ENCODE measurements at regions of chr6 and their contacts with region 1.

Region 1: DNA sequence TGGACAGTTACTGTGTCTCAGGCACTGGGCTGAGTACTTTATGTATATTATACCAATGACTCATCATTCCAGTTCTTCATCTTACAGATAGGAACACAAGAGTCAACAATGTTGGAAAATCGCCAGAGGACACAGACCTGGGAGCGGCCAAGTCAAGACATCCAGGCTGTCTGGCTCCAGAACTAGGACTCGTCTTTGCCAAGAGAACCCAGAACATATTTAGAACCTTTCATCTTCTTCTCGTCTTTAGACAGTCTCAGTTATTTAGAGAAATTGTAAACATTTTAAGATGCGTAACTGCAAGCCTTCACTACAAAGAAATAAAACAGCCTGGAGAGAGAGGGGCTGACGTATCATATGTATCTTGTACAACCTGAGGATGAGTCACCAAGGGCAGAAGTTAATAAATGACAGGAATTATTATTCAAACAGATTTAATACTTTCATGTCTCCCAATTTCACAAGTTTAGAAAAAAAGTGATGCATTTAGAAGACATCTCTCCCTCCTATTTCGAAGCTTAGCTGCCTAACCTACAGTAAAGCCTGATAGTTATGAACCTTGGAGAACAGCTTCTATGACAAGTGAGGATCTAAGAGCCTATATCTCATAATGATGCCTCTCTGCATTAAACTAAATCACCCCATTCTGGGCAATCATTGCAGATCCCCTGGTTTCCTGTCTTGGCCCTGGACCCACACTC is 43.4 kb downstream of the SLC22A3 start:
- DNase-seq: no peak
- H3K4me3 ChIP-seq: no peak overlapping the region
- H3K27ac ChIP-seq: peak overlapping the region; percentile 35 to 66
- H3K4me1 ChIP-seq: peaks cover 0 to 87% (median 44%) of the 10 kb centered on the region in 4 donors
- H3K27me3 ChIP-seq: no peaks in the 10 kb centered on the region
- CTCF ChIP-seq: no peak

Region 2: DNA sequence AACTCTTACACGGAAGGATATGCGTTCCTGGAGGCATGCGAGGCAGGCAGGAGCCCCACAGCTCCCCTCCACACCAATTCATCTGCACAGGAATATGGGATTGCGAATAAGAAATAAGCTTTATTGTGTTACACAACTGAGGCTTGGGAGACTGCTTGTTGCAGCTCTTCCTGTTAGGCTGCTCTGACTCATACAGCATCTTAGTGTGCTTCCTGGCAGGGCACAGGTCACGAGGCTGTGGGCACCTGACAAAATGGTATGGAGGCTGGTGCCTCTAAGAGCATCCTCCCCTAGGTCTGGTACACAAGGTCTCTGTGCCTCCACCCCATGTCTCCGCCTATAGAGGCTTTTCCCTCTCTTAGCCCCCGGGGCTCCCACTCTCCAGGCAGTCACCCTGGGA is 36.6 kb before region 1 on chr6:
- intact Hi-C with region 1: loop called (anchors 5 kb)
- DNase-seq: peak in 1 of 2 donors; percentile 80
- H3K4me3 ChIP-seq: no peak overlapping the region
- H3K27ac ChIP-seq: peak overlapping the region; percentile 87 to 89
- H3K4me1 ChIP-seq: peaks cover 0 to 92% (median 40%) of the 10 kb centered on the region in 4 donors
- H3K27me3 ChIP-seq: no peaks in the 10 kb centered on the region
- CTCF ChIP-seq: no peak

Measured in tibial artery (tissue), 4 donors.